ENCODE measurements at regions of chr20 and their contacts with region 1.

Region 1: DNA sequence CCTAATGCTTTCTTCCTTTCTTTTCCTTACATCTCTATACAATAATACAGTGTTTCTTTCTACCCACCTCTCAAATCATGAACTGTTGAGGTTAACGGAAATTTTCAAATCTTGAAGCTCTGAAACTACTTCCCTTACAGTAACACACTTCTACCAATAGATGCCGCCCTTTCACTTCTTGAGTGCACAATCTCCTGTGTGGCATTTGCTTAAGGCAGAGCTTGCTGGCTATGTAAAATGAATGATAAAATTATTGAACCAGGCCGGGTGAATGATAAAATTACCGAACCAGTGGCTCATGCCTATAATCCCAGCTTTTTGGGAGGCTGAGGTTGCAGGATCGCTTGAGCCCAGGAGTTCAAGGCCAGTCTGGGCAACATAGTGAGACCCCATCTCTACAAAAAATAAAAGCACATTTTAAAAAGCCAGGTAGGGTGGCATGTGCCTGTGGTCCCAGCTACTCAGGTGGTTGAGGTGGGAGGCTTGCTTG is 56.8 kb downstream of the KCNS1 start:
- DNase-seq: no peak
- H3K4me3 ChIP-seq: no peak overlapping the region
- H3K27ac ChIP-seq: no peak overlapping the region
- H3K4me1 ChIP-seq: peaks cover 0 to 17% (median 5%) of the 10 kb centered on the region in 3 donors
- H3K27me3 ChIP-seq: no peaks in the 10 kb centered on the region
- CTCF ChIP-seq: peak; percentile 59 to 88 (median 70)
- POLR2A ChIP-seq: no peak

Region 2: DNA sequence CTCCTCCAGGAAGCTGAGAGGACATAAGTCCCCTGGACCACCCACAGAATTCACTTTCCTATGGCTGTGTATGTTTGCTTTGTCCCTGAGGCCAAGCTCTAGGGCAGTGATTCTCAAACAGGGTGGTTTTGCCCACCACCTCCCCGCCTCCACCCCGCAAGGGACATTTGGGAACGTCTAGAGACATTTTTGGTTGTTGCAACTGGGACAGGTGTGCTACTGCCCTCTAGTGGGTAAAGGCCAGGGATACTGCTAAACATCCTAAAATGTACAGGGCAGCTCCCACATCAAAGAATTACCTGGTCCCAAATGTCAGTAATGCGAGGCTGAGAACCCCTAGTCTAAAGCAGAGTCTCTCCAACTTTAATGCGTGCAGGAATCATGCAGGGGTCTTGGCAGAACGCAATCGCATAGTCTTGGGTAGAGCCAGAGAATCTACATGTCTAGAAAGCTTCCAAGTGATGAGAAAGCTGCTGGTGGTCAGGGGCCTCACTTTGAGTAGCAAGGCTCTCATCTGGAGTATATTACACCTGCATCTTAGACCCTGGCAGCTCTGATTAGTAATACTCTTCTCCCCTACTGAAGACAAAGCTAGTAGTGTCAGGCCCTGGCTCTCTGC is 51.7 kb after region 1 on chr20:
- intact Hi-C with region 1: loop called (anchors 10 kb)
- DNase-seq: no peak
- H3K4me3 ChIP-seq: no peak overlapping the region
- H3K27ac ChIP-seq: no peak overlapping the region
- H3K4me1 ChIP-seq: peaks cover 3 to 19% (median 14%) of the 10 kb centered on the region in 3 donors
- H3K27me3 ChIP-seq: peaks cover 0 to 51% (median 8%) of the 10 kb centered on the region in 4 donors
- CTCF ChIP-seq: peak; percentile 35 to 75 (median 63)
- POLR2A ChIP-seq: no peak

Region 3: GRCh38 chr20:45450097-45450818 is 406.1 kb after region 1 on chr20:
- intact Hi-C with region 1: no loop called
- DNase-seq: no peak
- H3K4me3 ChIP-seq: no peak overlapping the region
- H3K27ac ChIP-seq: peak overlapping the region; percentile 21 to 83 (median 68)
- H3K4me1 ChIP-seq: no peaks in the 10 kb centered on the region
- H3K27me3 ChIP-seq: no peaks in the 10 kb centered on the region
- CTCF ChIP-seq: peak; percentile 44 to 63 (median 55)
- POLR2A ChIP-seq: no peak